CD4-positive, alpha-beta T cell (primary cell): ENCODE measurements at regions of chr2 and their contacts with region 1.

Region 1: GRCh38 chr2:70871398-70872211 is 36.0 kb upstream of the CD207 start:
- DNase-seq: peak; percentile 59 to 88 (median 74)
- ATAC-seq: peak; percentile 92
- H3K4me3 ChIP-seq: no peak overlapping the region
- H3K4me3 Mint-ChIP-seq: no peak overlapping the region
- H3K27ac ChIP-seq: no peak overlapping the region
- H3K27ac Mint-ChIP-seq: no peak overlapping the region
- H3K4me1 ChIP-seq: peaks cover 11% of the 10 kb centered on the region
- H3K4me1 Mint-ChIP-seq: peaks cover 5% of the 10 kb centered on the region
- H3K27me3 ChIP-seq: peaks cover 35 to 48% of the 10 kb centered on the region in 2 experiments
- H3K27me3 Mint-ChIP-seq: peaks cover 61% of the 10 kb centered on the region
- CTCF ChIP-seq: peak; percentile 83

Region 2: DNA sequence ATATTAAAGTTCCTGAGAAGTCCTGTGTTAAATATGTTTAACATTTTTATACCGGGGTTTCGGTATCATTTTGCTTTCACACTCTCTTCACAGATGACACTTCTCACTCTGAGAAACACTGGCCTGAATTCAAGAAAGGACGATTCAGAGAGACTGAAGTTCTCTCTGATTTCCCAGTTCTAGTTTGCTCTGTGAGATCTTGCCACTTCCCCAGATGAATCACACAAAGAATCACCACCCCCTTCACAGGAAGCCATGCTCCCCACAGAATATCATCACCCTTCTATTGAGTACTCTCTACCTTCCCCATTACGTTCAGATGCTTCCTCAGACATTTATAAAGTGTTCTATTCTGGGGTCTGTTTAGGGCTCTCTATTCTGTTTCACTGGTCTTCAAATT is 19.9 kb before region 1 on chr2:
- CTCF ChIA-PET with region 1: no interaction called
- POLR2A ChIA-PET with region 1: no interaction called
- intact Hi-C with region 1: no loop called
- DNase-seq: peak in 6 of 14 experiments; percentile 7 to 64 (median 48)
- ATAC-seq: peak; percentile 85
- H3K4me3 ChIP-seq: no peak overlapping the region
- H3K4me3 Mint-ChIP-seq: peak overlapping the region; percentile 26
- H3K27ac ChIP-seq: no peak overlapping the region
- H3K27ac Mint-ChIP-seq: peak overlapping the region; percentile 22
- H3K4me1 ChIP-seq: peaks cover 6% of the 10 kb centered on the region
- H3K4me1 Mint-ChIP-seq: peaks cover 24% of the 10 kb centered on the region
- H3K27me3 ChIP-seq: no peaks in the 10 kb centered on the region
- H3K27me3 Mint-ChIP-seq: no peaks in the 10 kb centered on the region
- CTCF ChIP-seq: no peak

Region 3: GRCh38 chr2:70919672-70920366 is 48.2 kb after region 1 on chr2:
- CTCF ChIA-PET with region 1: interaction called, 6 read pairs
- POLR2A ChIA-PET with region 1: no interaction called
- intact Hi-C with region 1: loop called (anchors 2 to 5 kb)
- DNase-seq: peak; percentile 34 to 81 (median 62)
- ATAC-seq: peak; percentile 61
- H3K4me3 ChIP-seq: no peak overlapping the region
- H3K4me3 Mint-ChIP-seq: no peak overlapping the region
- H3K27ac ChIP-seq: no peak overlapping the region
- H3K27ac Mint-ChIP-seq: no peak overlapping the region
- H3K4me1 ChIP-seq: peaks cover 3% of the 10 kb centered on the region
- H3K4me1 Mint-ChIP-seq: no peaks in the 10 kb centered on the region
- H3K27me3 ChIP-seq: peaks cover 2 to 9% of the 10 kb centered on the region in 2 experiments
- H3K27me3 Mint-ChIP-seq: peaks cover 43% of the 10 kb centered on the region
- CTCF ChIP-seq: peak; percentile 82

Region 4: DNA sequence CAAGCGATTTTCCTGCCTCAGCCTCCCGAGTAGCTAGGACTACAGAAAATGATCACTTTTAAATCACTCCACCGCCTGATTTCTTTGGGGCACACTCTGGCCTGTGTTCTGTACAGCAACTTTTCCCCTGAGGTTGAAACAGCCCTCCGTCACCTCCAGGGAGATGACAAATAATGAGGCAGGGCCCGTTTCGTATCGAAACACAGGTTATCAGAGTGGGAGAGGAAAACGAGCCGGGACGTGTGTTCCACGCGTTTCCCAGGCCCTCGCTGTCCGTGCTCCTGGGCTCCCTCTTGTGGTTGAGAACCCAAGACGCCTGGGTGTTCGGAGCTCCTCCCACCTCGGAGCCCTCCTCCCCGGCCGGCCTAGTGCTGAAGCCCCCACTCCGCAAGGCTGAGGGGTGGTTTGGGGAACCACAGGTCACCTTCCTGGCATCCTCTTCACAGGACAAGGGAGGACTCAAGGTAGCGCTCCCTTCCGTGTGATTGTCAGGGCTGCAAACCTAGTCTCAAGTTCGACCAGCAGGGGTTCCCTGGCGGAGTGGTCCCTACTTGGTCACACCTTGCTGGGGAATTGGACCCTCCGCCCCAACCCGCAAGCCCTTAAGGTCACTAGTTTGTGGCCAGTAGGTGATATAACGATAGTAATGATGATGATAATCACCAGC is 76.9 kb after region 1 on chr2:
- CTCF ChIA-PET with region 1: interaction called, 8 read pairs
- POLR2A ChIA-PET with region 1: no interaction called
- intact Hi-C with region 1: loop called (anchors 1 to 2 kb)
- DNase-seq: peak; percentile 62 to 87 (median 70)
- ATAC-seq: peak; percentile 95
- H3K4me3 ChIP-seq: peak overlapping the region; percentile 3
- H3K4me3 Mint-ChIP-seq: peak overlapping the region; percentile 79
- H3K27ac ChIP-seq: no peak overlapping the region
- H3K27ac Mint-ChIP-seq: no peak overlapping the region
- H3K4me1 ChIP-seq: peaks cover 13% of the 10 kb centered on the region
- H3K4me1 Mint-ChIP-seq: peaks cover 12% of the 10 kb centered on the region
- H3K27me3 ChIP-seq: peaks cover 2 to 3% of the 10 kb centered on the region in 2 experiments
- H3K27me3 Mint-ChIP-seq: peaks cover 22% of the 10 kb centered on the region
- CTCF ChIP-seq: peak; percentile 95